HCT116 (cell line): ENCODE measurements at regions of chr19 and their contacts with region 1.

Region 1: GRCh38 chr19:39546599-39546998 is 6.6 kb upstream of the EID2 start:
- DNase-seq: no peak
- ATAC-seq: no peak
- H3K4me3 ChIP-seq: no peak overlapping the region
- H3K27ac ChIP-seq: no peak overlapping the region
- H3K4me1 ChIP-seq: peaks cover 0 to 8% of the 10 kb centered on the region in 2 experiments; a peak in 1 of 4 replicates
- H3K27me3 ChIP-seq: no peaks in the 10 kb centered on the region
- CTCF ChIP-seq: no peak
- POLR2A ChIP-seq: no peak
- RAD21 ChIP-seq: no peak

Region 2: DNA sequence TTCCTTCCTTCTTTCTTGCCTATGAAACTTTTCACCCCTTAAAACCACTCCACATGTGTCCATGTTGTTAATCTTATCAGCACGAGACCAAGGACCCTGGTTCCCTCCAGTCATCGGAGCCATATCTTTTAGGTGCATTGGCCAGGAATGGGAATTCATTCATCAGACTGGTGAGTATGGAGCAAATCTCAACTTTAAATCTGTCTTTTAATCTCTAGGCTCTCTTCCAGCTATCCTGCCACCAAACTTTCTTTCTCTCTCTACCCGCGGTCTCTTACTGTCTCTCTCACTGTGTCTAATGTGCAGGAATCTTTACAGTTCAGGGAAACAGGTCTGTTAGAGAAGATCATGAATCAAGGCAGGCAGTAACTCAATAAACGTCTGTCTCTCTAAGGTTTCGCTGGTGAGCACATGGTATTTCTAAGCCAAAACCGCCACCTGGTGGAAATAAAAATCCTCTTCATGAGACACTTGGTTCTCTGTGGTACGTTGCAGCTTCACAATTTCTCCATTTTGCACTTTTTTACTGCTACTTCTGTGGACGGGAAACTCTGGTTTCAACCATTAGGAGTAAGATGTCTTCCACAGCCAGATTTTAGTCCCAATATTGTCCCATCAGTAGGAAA is 125.3 kb after region 1 on chr19:
- CTCF ChIA-PET with region 1: interaction called, 47 read pairs
- POLR2A ChIA-PET with region 1: no interaction called
- RAD21 ChIA-PET with region 1: interaction called in 1 of 2 experiments, 4 read pairs
- intact Hi-C with region 1: loop called (anchors 1 kb)
- DNase-seq: peak; percentile 66
- ATAC-seq: peak; percentile 96
- H3K4me3 ChIP-seq: no peak overlapping the region
- H3K27ac ChIP-seq: no peak overlapping the region
- H3K4me1 ChIP-seq: peaks cover 0 to 6% of the 10 kb centered on the region in 2 experiments; a peak in 1 of 4 replicates
- H3K27me3 ChIP-seq: 0 out of 2 replicates have a peak, but pooled peaks cover 3% of the 10 kb centered on the region
- CTCF ChIP-seq: peak; percentile 45 to 75 (median 62); a peak in 4 of 6 replicates
- POLR2A ChIP-seq: no peak
- RAD21 ChIP-seq: peak; percentile 92